Right cardiac atrium (tissue), 5 donors: ENCODE measurements at regions of chr3 and their contacts with region 1.

Region 1: DNA sequence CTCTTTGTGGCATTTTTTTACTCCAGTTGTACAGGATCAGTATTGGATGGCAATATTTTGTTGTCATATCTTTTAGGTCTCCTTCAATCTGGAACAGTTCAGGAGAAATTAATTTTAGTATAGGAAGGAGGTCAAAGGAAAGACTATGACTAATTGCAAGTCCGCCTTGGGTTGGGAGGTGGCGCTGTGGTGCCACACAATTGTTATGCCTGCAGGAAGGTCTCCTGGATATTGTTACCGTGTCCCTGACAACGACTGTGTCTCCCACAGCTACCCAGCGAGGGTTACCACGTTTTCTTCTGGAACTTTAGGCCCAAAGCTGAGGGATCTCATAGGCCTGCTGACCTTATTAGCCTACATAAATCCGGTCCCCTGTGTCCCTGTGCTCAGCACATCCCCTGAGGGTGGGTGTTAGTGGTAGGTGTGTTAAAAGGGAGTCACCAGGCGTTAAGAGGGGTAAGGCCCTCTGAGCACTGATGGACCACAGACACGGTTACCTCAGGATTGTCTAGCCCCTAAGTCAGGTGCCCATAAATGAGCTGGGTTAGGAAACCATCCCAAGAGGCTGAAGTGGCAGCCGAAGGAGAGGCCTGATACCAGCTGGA is 31.5 kb downstream of the KCNAB1 start:
- DNase-seq: peak; percentile 61 to 86 (median 82)
- ATAC-seq: peak; percentile 65 to 71
- H3K4me3 ChIP-seq: no peak overlapping the region
- H3K27ac ChIP-seq: no peak overlapping the region
- H3K4me1 ChIP-seq: no peaks in the 10 kb centered on the region
- H3K27me3 ChIP-seq: no peaks in the 10 kb centered on the region

Region 2: DNA sequence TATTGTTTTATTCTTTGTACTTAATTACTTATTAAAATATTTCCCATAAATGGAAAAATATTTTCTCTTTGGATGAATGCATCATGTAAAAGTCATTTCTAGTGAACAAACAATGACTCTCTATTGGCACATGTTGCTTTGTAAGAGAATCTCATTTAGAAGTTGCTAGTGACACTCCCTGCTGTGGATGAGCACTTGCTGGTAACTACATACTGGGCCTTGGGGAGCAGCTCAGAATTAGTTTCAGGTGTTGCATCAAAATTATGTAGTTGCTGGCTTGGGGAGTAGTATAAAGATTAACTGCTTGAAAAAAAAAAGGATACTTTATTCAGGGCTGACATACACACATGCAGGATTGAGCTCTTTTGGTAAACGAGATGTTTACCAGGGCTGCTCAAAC is 111.9 kb before region 1 on chr3:
- intact Hi-C with region 1: loop called in 1 of 4 experiments (anchors 10 kb)
- DNase-seq: no peak
- ATAC-seq: no peak
- H3K4me3 ChIP-seq: no peak overlapping the region
- H3K27ac ChIP-seq: no peak overlapping the region
- H3K4me1 ChIP-seq: no peaks in the 10 kb centered on the region
- H3K27me3 ChIP-seq: no peaks in the 10 kb centered on the region

Region 3: DNA sequence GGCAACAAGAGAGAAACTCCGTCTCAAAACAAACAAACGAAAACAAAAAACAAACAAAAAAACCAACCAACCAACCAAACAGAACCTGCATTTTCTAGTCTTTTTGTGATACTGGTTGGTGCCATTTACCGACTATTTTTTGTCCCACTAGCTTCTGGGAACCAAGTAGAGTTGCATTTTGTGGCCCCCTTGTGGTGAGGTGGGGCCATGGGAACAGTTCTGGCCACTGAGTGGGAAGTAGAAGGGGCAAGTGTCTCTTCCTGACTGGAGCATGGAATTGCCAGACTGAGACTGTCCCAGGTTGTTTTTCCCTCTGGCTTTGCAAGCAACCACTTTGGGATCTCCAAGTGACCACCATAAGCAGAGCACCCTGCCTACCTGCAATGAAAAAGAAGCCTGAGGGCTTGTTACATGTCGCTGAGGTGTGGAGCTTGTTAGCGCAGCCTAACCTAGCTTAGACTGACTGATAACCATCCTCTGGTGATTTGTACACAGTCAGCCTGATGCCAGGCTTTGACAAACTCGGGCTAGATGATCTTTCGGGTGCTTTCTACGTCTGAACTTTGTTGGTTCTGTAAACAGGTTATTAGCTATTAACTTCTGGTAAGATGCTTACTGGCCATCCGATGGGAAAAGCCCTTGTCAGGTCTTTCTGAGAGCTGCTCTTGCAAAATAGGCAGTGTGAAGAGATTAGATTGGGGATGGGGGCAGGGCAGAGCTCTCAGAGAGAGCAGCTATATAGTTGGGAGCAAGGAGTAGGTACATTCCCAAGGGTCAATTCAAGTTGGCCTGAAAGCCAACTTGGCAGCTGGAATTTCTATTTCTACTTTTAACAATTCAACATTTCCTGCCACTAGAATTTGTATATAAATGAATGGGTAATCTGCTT is 230.8 kb after region 1 on chr3:
- intact Hi-C with region 1: loop called in 1 of 4 experiments (anchors 5 kb)
- DNase-seq: no peak
- ATAC-seq: peak in 1 of 2 donors; percentile 44
- H3K4me3 ChIP-seq: no peak overlapping the region
- H3K27ac ChIP-seq: no peak overlapping the region
- H3K4me1 ChIP-seq: peaks cover 4% of the 10 kb centered on the region
- H3K27me3 ChIP-seq: no peaks in the 10 kb centered on the region

Region 4: GRCh38 chr3:156509189-156510174 is 357.6 kb after region 1 on chr3:
- intact Hi-C with region 1: loop called (anchors 5 kb)
- DNase-seq: no peak
- ATAC-seq: peak; percentile 57 to 67
- H3K4me3 ChIP-seq: no peak overlapping the region
- H3K27ac ChIP-seq: no peak overlapping the region
- H3K4me1 ChIP-seq: no peaks in the 10 kb centered on the region
- H3K27me3 ChIP-seq: no peaks in the 10 kb centered on the region